Activated CD8-positive, alpha-beta memory T cell treated with anti-CD3 and anti-CD28 coated beads, Interleukin-2, amount 10 ng/mL, durations not matched to agents 7 days and 5 days (primary cell): ENCODE measurements at regions of chr6 and their contacts with region 1.

Region 1: GRCh38 chr6:11224252-11224965 is 8.1 kb downstream of the NEDD9 start:
- DNase-seq: peak; percentile 89
- ATAC-seq: peak; percentile 85
- H3K4me3 Mint-ChIP-seq: peak overlapping the region; percentile 59
- H3K27ac Mint-ChIP-seq: peak overlapping the region; percentile 91
- H3K4me1 Mint-ChIP-seq: peaks cover 87% of the 10 kb centered on the region
- H3K27me3 Mint-ChIP-seq: no peaks in the 10 kb centered on the region

Region 2: GRCh38 chr6:11198663-11199603 is 25.5 kb before region 1 on chr6:
- CTCF ChIA-PET with region 1: interaction called, 13 read pairs
- DNase-seq: peak; percentile 78
- ATAC-seq: peak; percentile 82
- H3K4me3 Mint-ChIP-seq: peak overlapping the region; percentile 20
- H3K27ac Mint-ChIP-seq: peak overlapping the region; percentile 90
- H3K4me1 Mint-ChIP-seq: peaks cover 75% of the 10 kb centered on the region
- H3K27me3 Mint-ChIP-seq: no peaks in the 10 kb centered on the region

Region 3: GRCh38 chr6:11288047-11288461 is 63.6 kb after region 1 on chr6:
- CTCF ChIA-PET with region 1: no interaction called
- DNase-seq: no peak
- ATAC-seq: no peak
- H3K4me3 Mint-ChIP-seq: no peak overlapping the region
- H3K27ac Mint-ChIP-seq: no peak overlapping the region
- H3K4me1 Mint-ChIP-seq: peaks cover 30% of the 10 kb centered on the region
- H3K27me3 Mint-ChIP-seq: no peaks in the 10 kb centered on the region